Mammary epithelial cell (primary cell): ENCODE measurements at regions of chr15 and their contacts with region 1.

Region 1: GRCh38 chr15:85380217-85380811 is at the start of gene AKAP13:
- DNase-seq: peak; percentile 100
- H3K4me3 ChIP-seq: peak within 1 kb of the TSS; percentile 45 to 78 (median 77)
- H3K27ac ChIP-seq: peak within 1 kb of the TSS; percentile 74
- H3K4me1 ChIP-seq: peaks cover 19% of the 10 kb centered on the region
- H3K27me3 ChIP-seq: no peaks in the 10 kb centered on the region
- CTCF ChIP-seq: no peak
- total RNA-seq, gene AKAP13: 58.2 to 71.4 TPM

Region 2: GRCh38 chr15:85330901-85331588 is 49.3 kb before region 1 on chr15:
- CTCF ChIA-PET with region 1: interaction called, 6 read pairs
- dilution Hi-C with region 1: no loop called
- in situ Hi-C with region 1: no loop called
- intact Hi-C with region 1: loop called (anchors 1 kb)
- DNase-seq: peak; percentile 93
- H3K4me3 ChIP-seq: no peak overlapping the region
- H3K27ac ChIP-seq: peak overlapping the region; percentile 61
- H3K4me1 ChIP-seq: peaks cover 20% of the 10 kb centered on the region
- H3K27me3 ChIP-seq: no peaks in the 10 kb centered on the region
- CTCF ChIP-seq: peak; percentile 96 to 100

Region 3: DNA sequence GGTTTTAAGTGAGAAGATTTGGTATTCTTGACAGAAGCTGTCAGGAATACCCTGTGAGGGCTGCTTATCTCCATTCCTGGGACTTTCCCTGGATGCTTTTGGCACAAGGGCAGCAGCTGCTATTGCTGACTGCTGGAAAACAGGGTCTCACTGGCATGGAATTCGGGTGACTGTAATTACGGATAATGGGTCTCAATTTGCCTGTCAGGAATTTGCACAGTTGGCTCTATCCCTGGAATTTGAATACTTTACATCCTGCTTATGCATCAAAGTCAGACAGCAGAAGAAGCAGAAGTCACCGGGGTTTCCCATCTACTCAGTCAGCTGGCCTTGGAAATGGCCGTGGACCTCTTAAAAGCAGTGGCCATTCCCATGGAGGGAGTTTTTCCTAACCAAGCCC is 25.9 kb before region 1 on chr15:
- CTCF ChIA-PET with region 1: no interaction called
- dilution Hi-C with region 1: no loop called
- in situ Hi-C with region 1: no loop called
- intact Hi-C with region 1: loop called (anchors 2 kb)
- DNase-seq: no peak
- H3K4me3 ChIP-seq: no peak overlapping the region
- H3K27ac ChIP-seq: no peak overlapping the region
- H3K4me1 ChIP-seq: peaks cover 27% of the 10 kb centered on the region
- H3K27me3 ChIP-seq: no peaks in the 10 kb centered on the region
- CTCF ChIP-seq: no peak

Region 4: GRCh38 chr15:85397926-85398325 is 17.6 kb after region 1 on chr15:
- CTCF ChIA-PET with region 1: no interaction called
- dilution Hi-C with region 1: no loop called
- in situ Hi-C with region 1: no loop called
- intact Hi-C with region 1: loop called (anchors 2 kb)
- DNase-seq: no peak
- H3K4me3 ChIP-seq: no peak overlapping the region
- H3K27ac ChIP-seq: no peak overlapping the region
- H3K4me1 ChIP-seq: peaks cover 19% of the 10 kb centered on the region
- H3K27me3 ChIP-seq: no peaks in the 10 kb centered on the region
- CTCF ChIP-seq: no peak

Region 5: DNA sequence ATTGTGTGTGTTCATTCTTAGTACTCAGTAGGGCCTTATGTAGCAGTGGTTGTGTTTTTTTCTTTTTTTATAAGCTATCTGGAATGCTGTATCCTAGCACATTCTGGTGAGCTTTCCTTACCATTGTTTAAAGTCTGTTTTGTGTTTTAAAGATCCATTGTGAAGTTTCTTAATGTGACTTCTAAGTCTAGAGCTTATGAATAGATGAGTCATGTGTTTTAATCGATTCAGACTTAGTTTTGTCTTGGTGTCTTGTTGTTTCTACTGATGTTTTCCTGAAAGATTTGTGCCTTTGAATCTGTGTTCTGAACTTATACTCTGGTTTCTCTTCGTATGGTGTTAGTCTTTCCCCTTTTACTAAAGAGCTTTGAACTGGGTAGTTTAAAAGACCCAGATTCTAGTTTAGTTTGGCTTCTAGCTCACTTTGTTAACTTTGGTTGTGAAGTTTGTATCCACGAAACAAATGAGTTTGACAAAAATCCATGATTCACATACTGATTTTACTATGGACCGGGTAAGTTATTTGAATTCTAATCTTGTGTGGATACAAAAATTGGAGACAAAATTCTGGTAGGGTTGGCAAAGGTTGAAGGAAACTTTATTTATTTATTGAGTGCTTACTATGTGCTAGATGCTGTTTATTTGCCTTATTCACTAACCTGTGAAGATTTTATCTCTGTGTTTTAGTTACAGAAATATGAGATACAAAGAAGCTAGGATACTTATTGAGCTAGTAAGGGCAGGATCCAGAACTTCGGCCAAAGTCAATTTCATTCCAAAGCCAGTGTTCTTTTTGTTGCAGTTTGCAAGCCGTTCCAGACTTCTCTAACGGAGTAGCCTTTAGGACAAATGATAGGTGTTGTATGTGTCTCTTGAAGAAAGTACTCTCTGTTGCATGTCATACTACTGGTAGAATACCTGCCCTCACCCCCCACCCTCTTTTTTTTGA is 24.9 kb after region 1 on chr15:
- CTCF ChIA-PET with region 1: no interaction called
- dilution Hi-C with region 1: no loop called
- in situ Hi-C with region 1: no loop called
- intact Hi-C with region 1: loop called (anchors 1 kb)
- DNase-seq: peak; percentile 64
- H3K4me3 ChIP-seq: no peak overlapping the region
- H3K27ac ChIP-seq: peak overlapping the region; percentile 39
- H3K4me1 ChIP-seq: peaks cover 39% of the 10 kb centered on the region
- H3K27me3 ChIP-seq: no peaks in the 10 kb centered on the region
- CTCF ChIP-seq: no peak

Region 6: GRCh38 chr15:85412956-85413854 is 32.9 kb after region 1 on chr15:
- CTCF ChIA-PET with region 1: interaction called, 24 read pairs
- dilution Hi-C with region 1: no loop called
- in situ Hi-C with region 1: no loop called
- intact Hi-C with region 1: loop called (anchors 2 kb)
- DNase-seq: peak; percentile 98
- H3K4me3 ChIP-seq: no peak overlapping the region
- H3K27ac ChIP-seq: peak overlapping the region; percentile 98
- H3K4me1 ChIP-seq: peaks cover 44% of the 10 kb centered on the region
- H3K27me3 ChIP-seq: no peaks in the 10 kb centered on the region
- CTCF ChIP-seq: peak in 1 of 2 donors; percentile 28

Region 7: DNA sequence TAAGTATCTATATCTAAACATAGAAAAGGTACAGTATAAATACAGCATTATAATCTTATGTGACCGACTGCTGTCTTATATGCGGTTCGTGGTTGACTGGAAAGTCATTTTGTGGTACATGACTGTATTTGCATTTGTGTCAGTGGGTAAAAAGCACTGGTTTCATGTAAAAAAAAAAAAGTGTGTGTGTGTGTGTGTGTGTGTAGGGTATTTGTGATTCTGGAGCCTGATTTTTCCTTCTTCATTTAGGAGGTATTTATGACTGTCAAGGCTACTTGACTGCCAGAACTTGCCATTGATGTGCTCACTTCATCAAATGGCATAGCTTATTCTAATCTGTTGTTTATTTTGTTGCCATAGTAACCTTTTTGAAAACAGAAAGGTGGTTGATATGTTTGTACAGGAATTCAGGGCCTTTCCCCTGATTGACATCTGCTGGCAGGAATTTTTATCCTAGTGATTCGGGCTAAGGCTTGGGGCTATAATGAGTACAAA is 63.3 kb after region 1 on chr15:
- CTCF ChIA-PET with region 1: no interaction called
- dilution Hi-C with region 1: no loop called
- in situ Hi-C with region 1: no loop called
- intact Hi-C with region 1: no loop called
- DNase-seq: peak; percentile 88
- H3K4me3 ChIP-seq: no peak overlapping the region
- H3K27ac ChIP-seq: peak overlapping the region; percentile 77
- H3K4me1 ChIP-seq: peaks cover 19% of the 10 kb centered on the region
- H3K27me3 ChIP-seq: no peaks in the 10 kb centered on the region
- CTCF ChIP-seq: peak in 1 of 2 donors; percentile 31